Caco-2 (cell line): ENCODE measurements at regions of chr15 and their contacts with region 1.

Region 1: GRCh38 chr15:40044717-40045571 is 6.0 kb upstream of the SRP14 start:
- DNase-seq: peak; percentile 83 to 89
- H3K4me3 ChIP-seq: peak overlapping the region; percentile 19
- H3K4me3 Mint-ChIP-seq: peak overlapping the region; percentile 71
- H3K27ac Mint-ChIP-seq: peak overlapping the region; percentile 82
- H3K4me1 ChIP-seq: peaks cover 9% of the 10 kb centered on the region; the same call in 1 of the 2 replicates
- H3K4me1 Mint-ChIP-seq: peaks cover 22% of the 10 kb centered on the region
- H3K27me3 ChIP-seq: no peaks in the 10 kb centered on the region
- H3K27me3 Mint-ChIP-seq: no peaks in the 10 kb centered on the region
- CTCF ChIP-seq: peak; percentile 88

Region 2: GRCh38 chr15:40092256-40092978 is 47.5 kb after region 1 on chr15:
- CTCF ChIA-PET with region 1: interaction called, 3 read pairs
- POLR2A ChIA-PET with region 1: no interaction called
- intact Hi-C with region 1: loop called (anchors 1 kb)
- DNase-seq: peak; percentile 58 to 78
- H3K4me3 ChIP-seq: no peak overlapping the region
- H3K4me3 Mint-ChIP-seq: peak overlapping the region; percentile 31
- H3K27ac Mint-ChIP-seq: peak overlapping the region; percentile 86
- H3K4me1 ChIP-seq: peaks cover 84% of the 10 kb centered on the region
- H3K4me1 Mint-ChIP-seq: peaks cover 53% of the 10 kb centered on the region
- H3K27me3 ChIP-seq: no peaks in the 10 kb centered on the region
- H3K27me3 Mint-ChIP-seq: no peaks in the 10 kb centered on the region
- CTCF ChIP-seq: no peak

Region 3: GRCh38 chr15:40160689-40161688 is 116.0 kb after region 1 on chr15 and contains the start of gene BUB1B:
- CTCF ChIA-PET with region 1: interaction called, 8 read pairs
- POLR2A ChIA-PET with region 1: no interaction called
- intact Hi-C with region 1: loop called (anchors 2 kb)
- DNase-seq: peak; percentile 95
- H3K4me3 ChIP-seq: peak within 1 kb of the TSS; percentile 82
- H3K4me3 Mint-ChIP-seq: no peak within 1 kb of the TSS
- H3K27ac Mint-ChIP-seq: no peak within 1 kb of the TSS
- H3K4me1 ChIP-seq: peaks cover 18% of the 10 kb centered on the region
- H3K4me1 Mint-ChIP-seq: peaks cover under 1% of the 10 kb centered on the region
- H3K27me3 ChIP-seq: no peaks in the 10 kb centered on the region
- H3K27me3 Mint-ChIP-seq: no peaks in the 10 kb centered on the region
- CTCF ChIP-seq: no peak
- total RNA-seq, gene BUB1B: 62.7 and 73.5 TPM in 2 replicates